OCI-LY7 (cell line): ENCODE measurements at regions of chr7 and their contacts with region 1.

Region 1: GRCh38 chr7:26500749-26501352 is 209.2 kb downstream of the SNX10 start:
- DNase-seq: peak; percentile 72
- H3K4me3 ChIP-seq: no peak overlapping the region
- H3K27ac ChIP-seq: no peak overlapping the region
- H3K4me1 ChIP-seq: no peaks in the 10 kb centered on the region
- CTCF ChIP-seq: peak; percentile 90

Region 2: GRCh38 chr7:26278770-26279169 is 222.1 kb before region 1 on chr7:
- CTCF ChIA-PET with region 1: no interaction called
- POLR2A ChIA-PET with region 1: no interaction called
- intact Hi-C with region 1: loop called (anchors 5 kb)
- DNase-seq: peak; percentile 70
- H3K4me3 ChIP-seq: no peak overlapping the region
- H3K27ac ChIP-seq: no peak overlapping the region
- H3K4me1 ChIP-seq: no peaks in the 10 kb centered on the region
- CTCF ChIP-seq: peak; percentile 96

Region 3: DNA sequence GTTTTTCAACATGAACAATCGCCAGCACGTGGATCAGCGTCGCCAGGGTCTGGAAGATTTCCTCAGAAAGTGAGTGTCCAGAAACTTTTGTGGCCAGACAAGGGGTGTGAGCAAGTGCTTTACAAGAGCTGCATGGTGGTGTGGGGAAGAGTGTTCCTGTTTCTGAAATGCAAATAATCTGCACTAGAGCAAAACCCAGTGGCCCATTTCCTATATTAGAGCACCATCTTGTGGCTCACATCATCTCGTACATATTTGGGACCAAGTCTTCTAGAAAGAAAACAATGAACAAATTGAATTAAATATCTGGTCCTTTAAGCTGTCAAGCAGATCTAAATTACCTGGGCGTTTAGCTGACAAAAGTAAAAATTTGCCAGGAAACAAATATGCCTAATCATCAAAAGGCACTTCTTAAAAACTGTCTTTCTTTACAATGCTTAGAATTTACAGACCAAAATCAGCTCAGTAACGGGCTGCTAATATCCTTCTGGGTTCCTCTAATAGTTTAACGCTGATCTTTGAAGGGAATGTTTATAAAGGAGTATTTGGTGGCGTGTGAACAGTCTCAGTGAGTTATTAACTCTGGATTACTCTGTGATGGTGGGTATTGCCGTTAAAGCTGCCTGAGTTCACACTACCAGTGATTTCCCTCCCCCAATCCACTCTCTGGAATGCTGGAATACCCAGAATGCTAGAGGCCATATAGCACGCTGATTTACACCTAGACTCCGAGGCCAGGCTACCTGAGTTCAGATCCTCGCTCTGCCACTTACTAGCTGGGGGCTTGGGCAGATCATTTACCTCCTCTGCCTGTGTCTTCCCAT is 135.6 kb before region 1 on chr7:
- CTCF ChIA-PET with region 1: interaction called, 5 read pairs
- POLR2A ChIA-PET with region 1: interaction called, 4 read pairs
- intact Hi-C with region 1: loop called (anchors 1 kb)
- DNase-seq: peak; percentile 89
- H3K4me3 ChIP-seq: no peak overlapping the region
- H3K27ac ChIP-seq: peak overlapping the region; percentile 29
- H3K4me1 ChIP-seq: peaks cover 21% of the 10 kb centered on the region
- CTCF ChIP-seq: peak; percentile 93

Region 4: GRCh38 chr7:26376175-26376917 is 124.5 kb before region 1 on chr7:
- CTCF ChIA-PET with region 1: interaction called, 3 read pairs
- POLR2A ChIA-PET with region 1: interaction called, 3 read pairs
- intact Hi-C with region 1: loop called (anchors 1 kb)
- DNase-seq: peak; percentile 37
- H3K4me3 ChIP-seq: peak overlapping the region; percentile 55
- H3K27ac ChIP-seq: no peak overlapping the region
- H3K4me1 ChIP-seq: peaks cover 16% of the 10 kb centered on the region
- CTCF ChIP-seq: no peak

Region 5: GRCh38 chr7:26593393-26593792 is 92.5 kb after region 1 on chr7:
- CTCF ChIA-PET with region 1: no interaction called
- POLR2A ChIA-PET with region 1: no interaction called
- intact Hi-C with region 1: no loop called
- DNase-seq: no peak
- H3K4me3 ChIP-seq: no peak overlapping the region
- H3K27ac ChIP-seq: no peak overlapping the region
- H3K4me1 ChIP-seq: no peaks in the 10 kb centered on the region
- CTCF ChIP-seq: no peak